ENCODE measurements at regions of chr11 and their contacts with region 1.

Region 1: GRCh38 chr11:88337181-88337986 is at the start of gene CTSC:
- DNase-seq: peak; percentile 97
- H3K4me3 Mint-ChIP-seq: peak within 1 kb of the TSS; percentile 89
- H3K27ac Mint-ChIP-seq: peak within 1 kb of the TSS; percentile 98
- H3K4me1 Mint-ChIP-seq: peaks cover 55% of the 10 kb centered on the region
- H3K27me3 Mint-ChIP-seq: no peaks in the 10 kb centered on the region
- total RNA-seq, gene CTSC: 321 to 323 TPM

Region 2: GRCh38 chr11:88301488-88302140 is 35.8 kb before region 1 on chr11:
- CTCF ChIA-PET with region 1: no interaction called
- POLR2A ChIA-PET with region 1: interaction called, 12 read pairs
- DNase-seq: no peak
- H3K4me3 Mint-ChIP-seq: peak overlapping the region; percentile 50
- H3K27ac Mint-ChIP-seq: peak overlapping the region; percentile 69
- H3K4me1 Mint-ChIP-seq: peaks cover 41% of the 10 kb centered on the region
- H3K27me3 Mint-ChIP-seq: no peaks in the 10 kb centered on the region

Region 3: DNA sequence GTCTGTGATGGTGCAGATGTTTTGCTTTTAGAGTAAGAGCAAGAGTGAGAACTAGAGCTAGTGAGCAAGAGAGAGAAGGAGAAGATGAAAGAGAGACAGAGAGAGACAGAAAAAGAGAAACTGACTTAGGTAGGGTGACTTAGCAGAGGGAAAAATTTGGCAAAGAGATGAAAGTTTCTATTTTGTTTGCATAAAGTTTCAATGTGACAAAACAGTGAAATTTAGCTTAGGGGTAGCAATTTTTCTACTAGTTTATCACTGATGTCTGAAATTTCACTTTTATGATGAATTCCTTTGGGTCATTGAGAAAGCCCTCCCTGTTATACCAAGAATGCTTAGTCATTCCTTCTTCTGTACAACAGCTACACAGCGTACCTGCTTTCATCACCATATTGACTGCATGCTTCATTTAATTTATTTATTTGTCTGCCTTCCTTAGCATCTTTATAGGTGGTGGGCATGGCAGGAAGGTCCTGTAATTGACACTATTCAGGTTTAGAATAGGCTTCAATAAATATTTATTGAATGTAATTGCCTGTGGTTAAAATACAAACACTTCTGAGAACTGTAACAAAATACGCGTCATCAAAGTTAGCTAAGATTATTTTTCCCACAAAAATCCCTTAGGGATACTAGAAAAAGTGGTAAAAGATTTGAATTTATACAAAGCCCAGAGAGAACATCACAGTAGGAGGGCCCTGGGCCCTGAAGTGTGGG is 20.1 kb after region 1 on chr11:
- CTCF ChIA-PET with region 1: interaction called, 37 read pairs
- POLR2A ChIA-PET with region 1: interaction called, 187 read pairs
- DNase-seq: no peak
- H3K4me3 Mint-ChIP-seq: peak overlapping the region; percentile 55
- H3K27ac Mint-ChIP-seq: peak overlapping the region; percentile 88
- H3K4me1 Mint-ChIP-seq: peaks cover 53% of the 10 kb centered on the region
- H3K27me3 Mint-ChIP-seq: no peaks in the 10 kb centered on the region

Region 4: DNA sequence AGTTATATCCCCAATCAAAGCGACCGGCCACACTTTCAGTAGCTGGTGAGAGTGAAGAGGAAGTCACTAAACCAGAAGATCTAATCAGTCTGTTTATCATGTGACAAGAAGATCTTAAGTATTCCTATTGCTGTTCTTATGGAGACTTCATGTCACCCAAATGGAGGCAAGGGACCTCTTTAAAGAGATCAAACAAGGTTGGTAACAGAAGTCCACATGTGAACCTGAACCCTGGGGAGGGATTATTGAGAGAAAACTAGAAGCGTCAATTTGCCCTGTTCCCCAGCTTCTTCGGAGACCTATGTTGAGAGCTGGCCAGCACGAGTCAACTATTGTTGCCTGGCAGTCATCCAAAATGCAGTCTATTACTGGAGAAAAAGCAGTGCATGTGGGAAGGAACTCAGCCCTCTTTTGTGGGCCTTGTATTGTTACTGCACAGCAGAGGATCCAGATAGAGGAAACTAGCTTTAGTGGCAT is 77.0 kb after region 1 on chr11:
- CTCF ChIA-PET with region 1: interaction called, 7 read pairs
- POLR2A ChIA-PET with region 1: interaction called, 165 read pairs
- DNase-seq: no peak
- H3K4me3 Mint-ChIP-seq: peak overlapping the region; percentile 62
- H3K27ac Mint-ChIP-seq: peak overlapping the region; percentile 89
- H3K4me1 Mint-ChIP-seq: peaks cover 72% of the 10 kb centered on the region
- H3K27me3 Mint-ChIP-seq: no peaks in the 10 kb centered on the region

Region 5: DNA sequence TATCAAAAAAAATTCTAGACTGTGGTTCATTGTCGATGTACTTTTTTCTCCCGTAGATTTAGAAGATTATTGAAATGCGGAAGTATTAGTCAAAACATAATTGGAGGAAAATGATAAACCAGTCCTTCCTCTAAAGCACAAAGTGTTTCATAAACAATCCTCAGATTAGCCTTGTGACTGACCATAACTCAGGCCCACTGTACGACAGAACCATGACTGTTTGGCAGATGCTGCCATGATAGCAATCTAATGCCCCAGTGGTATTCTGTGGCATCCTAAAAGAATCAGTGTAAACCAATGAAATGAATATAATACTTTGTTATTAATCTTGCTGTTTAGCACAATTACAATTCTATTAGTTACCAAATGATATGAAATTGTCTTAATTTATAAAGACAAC is 127.1 kb after region 1 on chr11:
- CTCF ChIA-PET with region 1: no interaction called
- POLR2A ChIA-PET with region 1: no interaction called
- DNase-seq: no peak
- H3K4me3 Mint-ChIP-seq: no peak overlapping the region
- H3K27ac Mint-ChIP-seq: no peak overlapping the region
- H3K4me1 Mint-ChIP-seq: no peaks in the 10 kb centered on the region
- H3K27me3 Mint-ChIP-seq: peaks cover 30% of the 10 kb centered on the region

Region 6: GRCh38 chr11:88535916-88536547 is 198.6 kb after region 1 on chr11:
- CTCF ChIA-PET with region 1: interaction called, 3 read pairs
- POLR2A ChIA-PET with region 1: interaction called, 18 read pairs
- DNase-seq: no peak
- H3K4me3 Mint-ChIP-seq: no peak overlapping the region
- H3K27ac Mint-ChIP-seq: no peak overlapping the region
- H3K4me1 Mint-ChIP-seq: peaks cover 20% of the 10 kb centered on the region
- H3K27me3 Mint-ChIP-seq: peaks cover 5% of the 10 kb centered on the region

Region 7: DNA sequence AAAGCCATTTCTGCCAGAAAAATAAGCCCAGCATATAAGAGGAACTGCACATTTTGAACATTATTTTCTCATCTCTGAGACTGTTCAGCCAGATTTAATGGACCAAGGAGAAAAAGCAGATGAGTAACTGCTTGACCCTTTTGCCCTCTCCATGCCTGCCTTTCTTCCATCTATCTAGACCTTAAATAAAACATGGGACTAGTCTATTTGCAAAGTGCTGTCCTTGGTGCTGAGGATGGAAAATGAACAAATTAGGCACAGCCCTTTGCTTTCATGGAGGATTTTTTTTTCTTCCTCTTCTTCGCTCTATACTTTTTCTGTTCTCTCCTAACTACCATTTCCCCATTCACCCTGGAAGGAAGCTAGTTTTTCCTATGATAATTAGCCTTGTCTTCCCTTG is 367.1 kb after region 1 on chr11:
- CTCF ChIA-PET with region 1: no interaction called
- POLR2A ChIA-PET with region 1: no interaction called
- DNase-seq: no peak
- H3K4me3 Mint-ChIP-seq: no peak overlapping the region
- H3K27ac Mint-ChIP-seq: no peak overlapping the region
- H3K4me1 Mint-ChIP-seq: no peaks in the 10 kb centered on the region
- H3K27me3 Mint-ChIP-seq: no peaks in the 10 kb centered on the region

Measured in activated CD4-positive, alpha-beta memory T cell treated with anti-CD3 and anti-CD28 coated beads, Interleukin-2, amount 10 ng/mL, durations not matched to agents 7 days and 5 days (primary cell).